RWPE1 (cell line): ENCODE measurements at regions of chr1 and their contacts with region 1.

Region 1: GRCh38 chr1:32716312-32717148 is 14.0 kb upstream of the SYNC start:
- DNase-seq: peak; percentile 97
- H3K27ac ChIP-seq: peak overlapping the region; percentile 73
- CTCF ChIP-seq: no peak

Region 2: DNA sequence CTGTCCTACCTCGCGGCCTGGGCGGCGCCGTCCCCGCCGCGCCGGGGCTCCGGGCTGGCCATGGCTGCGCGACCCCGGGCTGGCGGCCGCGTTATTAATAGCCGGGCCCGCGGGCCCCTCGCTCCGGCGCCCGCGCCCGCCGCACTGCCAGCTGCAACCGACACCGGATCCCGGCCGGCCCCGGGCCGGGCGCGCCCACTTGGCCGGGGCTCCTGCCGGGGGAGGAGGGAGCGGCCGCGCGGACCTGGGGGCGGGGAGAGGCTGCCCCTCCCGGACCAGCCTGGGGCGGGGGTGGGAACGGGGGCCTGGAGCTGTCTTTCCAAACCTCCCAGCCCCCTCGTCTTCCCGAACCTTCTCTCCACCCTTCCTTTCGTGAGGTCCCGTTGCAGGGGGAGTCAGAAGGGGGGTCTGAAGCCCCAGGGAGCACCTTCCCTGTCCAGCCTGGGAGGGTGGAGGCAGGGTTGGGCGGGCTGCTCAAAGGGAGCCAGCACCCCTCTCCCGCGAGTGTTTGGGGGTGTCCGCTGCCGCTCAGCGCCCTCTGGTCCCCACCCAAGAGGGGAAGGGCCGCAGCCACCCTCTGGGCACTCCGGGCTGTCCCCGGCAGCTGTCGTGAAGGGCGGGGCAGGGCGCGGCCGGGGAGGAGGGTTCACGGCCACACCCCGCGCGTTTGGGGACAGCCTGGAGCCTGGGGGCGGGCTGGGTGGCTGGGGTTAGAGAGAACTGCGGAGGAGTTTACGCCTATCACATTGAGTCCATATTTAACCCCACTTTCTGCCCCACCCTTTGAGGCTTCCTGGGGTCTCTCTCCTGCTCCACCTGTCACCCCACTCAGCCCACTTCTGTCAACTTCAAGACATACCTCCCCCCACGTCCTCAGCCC is 13.7 kb before region 1 on chr1 and contains the start of gene SYNC:
- CTCF ChIA-PET with region 1: interaction called, 26 read pairs
- POLR2A ChIA-PET with region 1: no interaction called
- DNase-seq: peak; percentile 59
- H3K27ac ChIP-seq: peak within 1 kb of the TSS; percentile 93
- CTCF ChIP-seq: no peak

Region 3: GRCh38 chr1:32741413-32742198 is 25.1 kb after region 1 on chr1:
- CTCF ChIA-PET with region 1: interaction called, 13 read pairs
- POLR2A ChIA-PET with region 1: no interaction called
- DNase-seq: peak; percentile 70
- H3K27ac ChIP-seq: peak overlapping the region; percentile 94
- CTCF ChIP-seq: peak; percentile 53

Region 4: DNA sequence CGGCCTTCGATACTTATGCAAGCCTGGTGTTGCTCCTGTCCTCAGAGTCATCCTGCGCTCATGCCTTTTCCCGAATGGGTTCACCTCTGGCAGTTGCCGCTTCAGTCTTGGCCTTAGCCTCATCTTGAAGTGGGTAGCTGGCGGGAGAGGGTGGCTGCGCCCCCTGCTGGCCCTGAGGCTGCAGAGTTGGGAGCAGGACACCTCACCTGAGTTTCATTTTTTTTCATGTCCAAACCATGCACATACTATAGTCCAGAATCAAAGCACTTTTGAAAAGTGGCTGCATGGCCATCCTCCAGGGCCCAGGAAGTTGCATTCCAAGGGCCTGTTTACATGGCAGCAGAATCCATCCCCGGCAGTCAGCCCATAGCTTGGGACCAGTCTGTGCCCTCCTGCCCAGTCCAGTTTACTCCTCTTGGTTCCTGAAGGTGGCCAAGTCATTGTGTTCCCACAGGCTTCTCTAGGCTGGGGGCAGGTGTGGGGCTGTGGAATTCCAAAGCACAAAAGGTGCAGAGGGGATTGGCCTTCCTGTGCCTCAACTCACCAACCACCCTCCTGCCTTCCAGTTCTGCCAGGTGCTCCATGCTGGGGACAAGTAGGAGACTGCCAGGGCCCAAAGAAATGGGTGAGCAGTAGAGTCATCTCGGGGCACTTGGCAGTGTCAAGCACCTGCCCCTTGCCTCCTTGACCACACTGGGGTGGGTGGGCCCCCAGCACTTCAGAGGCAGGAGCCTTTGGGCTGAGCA is 56.7 kb after region 1 on chr1:
- CTCF ChIA-PET with region 1: interaction called, 132 read pairs
- POLR2A ChIA-PET with region 1: interaction called, 6 read pairs
- DNase-seq: peak; percentile 72
- H3K27ac ChIP-seq: peak overlapping the region; percentile 100
- CTCF ChIP-seq: peak; percentile 95